ENCODE measurements at regions of chr15 and their contacts with region 1.

Region 1: DNA sequence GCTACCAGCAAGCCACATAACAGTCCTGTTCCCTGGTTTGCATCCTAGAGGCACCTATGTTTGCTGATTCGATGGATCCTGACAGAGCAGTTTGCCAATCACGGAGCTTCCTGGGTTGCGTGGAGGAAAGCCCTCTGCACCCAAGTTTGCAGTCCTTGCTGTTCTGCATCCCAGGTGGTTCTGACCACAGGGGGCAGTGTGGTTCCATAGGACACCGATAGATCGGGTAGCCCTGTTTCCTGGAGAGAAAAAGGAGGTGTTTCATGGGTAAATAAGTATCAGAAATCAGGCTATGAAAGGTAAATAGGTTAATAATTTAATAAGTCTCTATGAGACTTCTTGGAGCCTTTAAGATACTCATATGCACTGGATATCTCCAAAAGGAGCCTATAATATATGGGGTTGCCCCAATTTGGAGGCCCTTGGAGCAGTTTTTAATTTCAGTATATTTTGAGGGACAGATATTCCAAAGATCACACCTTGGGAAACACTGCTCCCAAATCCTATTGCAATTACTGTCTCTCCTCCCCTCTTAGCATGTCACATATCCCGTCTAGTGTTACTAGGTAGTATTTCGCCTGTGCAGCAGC is 194.6 kb upstream of the TPM1 start:
- DNase-seq: peak; percentile 89

Region 2: DNA sequence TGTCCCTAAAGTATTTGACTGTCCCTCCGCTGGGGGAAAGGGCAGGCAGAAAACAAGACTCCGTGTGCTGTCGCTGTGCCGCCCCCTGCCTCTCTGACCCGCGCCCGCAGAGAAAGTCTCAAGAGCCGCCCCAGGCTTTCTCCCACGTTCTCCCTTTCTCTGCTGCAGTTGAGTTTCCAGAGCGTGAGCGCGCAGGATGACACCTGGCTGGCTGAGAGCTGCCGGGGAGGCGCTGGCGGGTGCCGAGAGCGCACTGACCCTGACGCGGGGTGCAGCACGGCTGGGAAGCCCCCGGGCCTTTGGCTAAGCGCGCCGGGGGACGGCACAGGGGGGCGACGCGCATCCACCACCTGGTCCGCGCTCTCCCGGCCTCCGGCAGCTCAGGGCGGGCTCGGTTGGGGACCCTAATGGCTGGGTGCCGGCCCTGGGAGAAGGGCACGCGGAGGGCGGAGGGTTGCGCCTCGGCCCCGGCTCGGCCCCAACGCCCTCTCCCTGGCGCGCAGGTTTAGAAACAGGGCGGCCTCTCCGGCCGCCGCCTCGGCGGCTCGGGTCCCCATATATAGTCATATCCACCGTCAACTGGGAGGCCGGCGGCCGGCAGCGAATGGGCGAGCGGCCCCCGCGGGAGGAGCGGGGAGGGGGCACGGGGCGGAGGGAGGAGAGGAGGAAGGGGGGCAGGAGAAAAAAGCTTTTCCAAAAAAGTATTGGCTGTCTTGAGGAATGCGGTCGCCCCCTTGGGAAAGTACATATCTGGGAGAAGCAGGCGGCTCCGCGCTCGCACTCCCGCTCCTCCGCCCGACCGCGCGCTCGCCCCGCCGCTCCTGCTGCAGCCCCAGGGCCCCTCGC is 194.2 kb after region 1 on chr15 and contains the start of gene TPM1:
- intact Hi-C with region 1: loop called in 1 of 2 experiments (anchors 5 kb)
- DNase-seq: peak; percentile 96
- total RNA-seq, gene TPM1: 1,343 to 1,694 TPM